Gastrocnemius medialis (tissue), 4 donors: ENCODE measurements at regions of chr10 and their contacts with region 1.

Region 1: GRCh38 chr10:69092959-69093850 is 5.3 kb downstream of the SRGN start:
- DNase-seq: peak; percentile 50 to 69
- ATAC-seq: peak; percentile 83 to 93
- H3K4me3 ChIP-seq: no peak overlapping the region
- H3K27ac ChIP-seq: peak overlapping the region in 2 of 4 donors; percentile 38 to 47
- H3K4me1 ChIP-seq: peaks cover 0 to 5% of the 10 kb centered on the region in 2 donors
- H3K27me3 ChIP-seq: no peaks in the 10 kb centered on the region
- CTCF ChIP-seq: peak; percentile 73 to 82 (median 76)
- POLR2A ChIP-seq: no peak

Region 2: GRCh38 chr10:68955832-68956532 is 137.2 kb before region 1 on chr10 and contains the start of gene DDX21:
- in situ Hi-C with region 1: no loop called
- intact Hi-C with region 1: loop called (anchors 1 kb)
- DNase-seq: peak; percentile 82 to 83
- ATAC-seq: peak; percentile 97
- H3K4me3 ChIP-seq: peak within 1 kb of the TSS; percentile 96 to 98 (median 98)
- H3K27ac ChIP-seq: peak within 1 kb of the TSS; percentile 92 to 98 (median 96)
- H3K4me1 ChIP-seq: peaks cover 18 to 24% of the 10 kb centered on the region in 2 donors
- H3K27me3 ChIP-seq: no peaks in the 10 kb centered on the region
- CTCF ChIP-seq: peak; percentile 25 to 63 (median 47)
- POLR2A ChIP-seq: peak; percentile 78 to 84
- total RNA-seq, gene DDX21: 44.4 to 66.8 (median 53.7) TPM

Region 3: GRCh38 chr10:68988530-68989316 is 104.5 kb before region 1 on chr10 and contains the start of gene KIFBP:
- in situ Hi-C with region 1: loop called in 2 of 4 experiments (anchors 5 to 10 kb)
- intact Hi-C with region 1: loop called (anchors 1 kb)
- DNase-seq: peak; percentile 88 to 92
- ATAC-seq: peak; percentile 98
- H3K4me3 ChIP-seq: peak within 1 kb of the TSS; percentile 90 to 92 (median 90)
- H3K27ac ChIP-seq: peak within 1 kb of the TSS; percentile 78 to 87 (median 84)
- H3K4me1 ChIP-seq: peaks cover 35 to 45% of the 10 kb centered on the region in 2 donors
- H3K27me3 ChIP-seq: no peaks in the 10 kb centered on the region
- CTCF ChIP-seq: peak in 4 of 5 experiments; percentile 17 to 60 (median 44)
- POLR2A ChIP-seq: peak; percentile 57 to 73
- total RNA-seq, gene KIFBP: 24.0 to 41.3 (median 33.9) TPM

Region 4: GRCh38 chr10:69004821-69005220 is 88.4 kb before region 1 on chr10:
- in situ Hi-C with region 1: loop called in 1 of 4 experiments (anchors 10 kb)
- intact Hi-C with region 1: loop called (anchors 2 kb)
- DNase-seq: no peak
- ATAC-seq: peak in 1 of 2 donors; percentile 24
- H3K4me3 ChIP-seq: no peak overlapping the region
- H3K27ac ChIP-seq: peak overlapping the region in 1 of 4 donors; percentile 27
- H3K4me1 ChIP-seq: no peaks in the 10 kb centered on the region
- H3K27me3 ChIP-seq: no peaks in the 10 kb centered on the region
- CTCF ChIP-seq: peak; percentile 20 to 42 (median 40)
- POLR2A ChIP-seq: no peak

Region 5: DNA sequence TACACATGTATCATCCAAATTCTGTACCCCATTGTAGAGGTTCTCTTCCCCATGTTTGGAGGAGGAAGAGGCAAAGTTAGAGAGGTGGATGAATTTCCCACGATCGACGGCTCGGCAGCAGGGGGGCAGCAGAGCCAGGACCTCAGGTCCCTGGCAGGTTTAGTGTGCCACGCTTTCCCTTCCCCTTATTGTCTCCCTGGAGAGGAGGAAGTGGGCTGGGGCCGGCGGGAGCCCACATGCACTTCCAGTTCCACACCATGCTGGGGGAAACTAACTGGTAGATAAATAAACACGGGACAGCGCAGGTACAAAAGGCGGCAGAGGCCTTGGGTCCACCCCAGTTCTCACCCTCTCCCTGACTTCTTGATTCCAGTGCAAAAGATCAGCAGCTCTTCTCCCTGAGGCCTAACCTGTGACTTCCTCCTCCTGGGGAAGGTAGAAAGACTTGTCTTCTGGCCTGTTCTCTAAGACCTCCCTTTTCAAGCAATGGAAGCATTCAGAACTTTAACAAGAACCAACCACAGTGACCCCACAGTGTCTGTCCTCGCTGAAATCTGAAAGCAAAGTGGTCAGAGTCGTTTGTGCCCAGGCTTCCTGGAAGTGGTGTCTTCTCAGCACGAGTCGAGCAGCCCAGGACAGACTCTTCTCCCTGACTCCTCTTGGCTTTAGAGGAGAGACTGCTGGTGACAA is 35.8 kb before region 1 on chr10:
- in situ Hi-C with region 1: no loop called
- intact Hi-C with region 1: loop called (anchors 2 kb)
- DNase-seq: peak in 1 of 2 donors; percentile 28
- ATAC-seq: no peak
- H3K4me3 ChIP-seq: peak overlapping the region in 1 of 4 donors; percentile 6
- H3K27ac ChIP-seq: peak overlapping the region; percentile 52 to 70 (median 64)
- H3K4me1 ChIP-seq: peaks cover 7 to 11% of the 10 kb centered on the region in 2 donors
- H3K27me3 ChIP-seq: no peaks in the 10 kb centered on the region
- CTCF ChIP-seq: peak in 2 of 5 experiments; percentile 9 to 24
- POLR2A ChIP-seq: peak in 1 of 2 donors; percentile 22

Region 6: GRCh38 chr10:69069090-69070042 is 23.8 kb before region 1 on chr10:
- in situ Hi-C with region 1: no loop called
- intact Hi-C with region 1: no loop called
- DNase-seq: no peak
- ATAC-seq: peak in 1 of 2 donors; percentile 39
- H3K4me3 ChIP-seq: no peak overlapping the region
- H3K27ac ChIP-seq: no peak overlapping the region
- H3K4me1 ChIP-seq: no peaks in the 10 kb centered on the region
- H3K27me3 ChIP-seq: no peaks in the 10 kb centered on the region
- CTCF ChIP-seq: no peak
- POLR2A ChIP-seq: no peak